ENCODE measurements at regions of chr17 and their contacts with region 1.

Region 1: GRCh38 chr17:56819431-56820145 is 14.1 kb downstream of the C17orf67 start:
- DNase-seq: peak; percentile 87
- H3K4me3 Mint-ChIP-seq: no peak overlapping the region
- H3K27ac Mint-ChIP-seq: peak overlapping the region; percentile 9
- H3K4me1 Mint-ChIP-seq: peaks cover 4% of the 10 kb centered on the region
- H3K27me3 Mint-ChIP-seq: no peaks in the 10 kb centered on the region
- CTCF ChIP-seq: peak; percentile 74

Region 2: DNA sequence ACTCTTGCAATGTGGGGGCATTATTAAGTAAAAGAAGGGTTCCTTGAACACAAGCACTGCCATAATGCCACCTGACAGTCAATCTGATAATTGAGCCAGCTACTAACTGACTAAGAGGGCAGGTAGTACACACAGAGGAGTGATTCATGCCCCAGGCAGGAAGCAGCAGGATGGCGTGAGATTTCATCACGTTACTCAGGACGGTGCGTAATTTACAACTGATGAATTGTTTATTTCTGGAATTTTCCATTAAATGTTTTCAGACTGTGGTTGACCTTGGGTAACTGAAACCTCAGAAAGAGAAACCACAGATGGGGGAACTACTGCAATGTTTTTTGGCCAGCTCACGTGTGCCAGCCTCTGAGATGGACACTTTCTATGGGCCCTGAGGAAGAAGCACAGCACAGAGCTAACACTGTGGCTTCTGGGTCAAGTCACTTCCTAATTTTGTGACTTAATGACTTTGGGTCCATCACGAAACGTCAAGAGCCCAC is 32.6 kb before region 1 on chr17:
- CTCF ChIA-PET with region 1: interaction called, 8 read pairs
- POLR2A ChIA-PET with region 1: interaction called, 13 read pairs
- intact Hi-C with region 1: no loop called
- DNase-seq: peak; percentile 97
- H3K4me3 Mint-ChIP-seq: peak overlapping the region; percentile 61
- H3K27ac Mint-ChIP-seq: peak overlapping the region; percentile 96
- H3K4me1 Mint-ChIP-seq: peaks cover 40% of the 10 kb centered on the region
- H3K27me3 Mint-ChIP-seq: no peaks in the 10 kb centered on the region
- CTCF ChIP-seq: no peak

Region 3: GRCh38 chr17:56808503-56808902 is 11.1 kb before region 1 on chr17:
- CTCF ChIA-PET with region 1: interaction called, 18 read pairs
- POLR2A ChIA-PET with region 1: interaction called, 9 read pairs
- intact Hi-C with region 1: no loop called
- DNase-seq: peak; percentile 69
- H3K4me3 Mint-ChIP-seq: no peak overlapping the region
- H3K27ac Mint-ChIP-seq: no peak overlapping the region
- H3K4me1 Mint-ChIP-seq: peaks cover 12% of the 10 kb centered on the region
- H3K27me3 Mint-ChIP-seq: no peaks in the 10 kb centered on the region
- CTCF ChIP-seq: no peak

Region 4: GRCh38 chr17:56939901-56940343 is 120.3 kb after region 1 on chr17:
- CTCF ChIA-PET with region 1: interaction called, 18 read pairs
- POLR2A ChIA-PET with region 1: interaction called, 3 read pairs
- intact Hi-C with region 1: loop called (anchors 1 kb)
- DNase-seq: peak; percentile 71
- H3K4me3 Mint-ChIP-seq: no peak overlapping the region
- H3K27ac Mint-ChIP-seq: no peak overlapping the region
- H3K4me1 Mint-ChIP-seq: peaks cover 15% of the 10 kb centered on the region
- H3K27me3 Mint-ChIP-seq: no peaks in the 10 kb centered on the region
- CTCF ChIP-seq: peak; percentile 84

Region 5: GRCh38 chr17:57009737-57010445 is 190.3 kb after region 1 on chr17:
- CTCF ChIA-PET with region 1: no interaction called
- POLR2A ChIA-PET with region 1: no interaction called
- intact Hi-C with region 1: loop called (anchors 1 kb)
- DNase-seq: peak; percentile 68
- H3K4me3 Mint-ChIP-seq: no peak overlapping the region
- H3K27ac Mint-ChIP-seq: no peak overlapping the region
- H3K4me1 Mint-ChIP-seq: peaks cover 6% of the 10 kb centered on the region
- H3K27me3 Mint-ChIP-seq: no peaks in the 10 kb centered on the region
- CTCF ChIP-seq: peak; percentile 76